Thyroid gland (tissue), 4 donors: ENCODE measurements at regions of chr11 and their contacts with region 1.

Region 1: GRCh38 chr11:72793425-72794367 is at the start of gene STARD10:
- DNase-seq: peak; percentile 95 to 96
- H3K4me3 ChIP-seq: peak within 1 kb of the TSS; percentile 31 to 51 (median 41)
- H3K27ac ChIP-seq: peak within 1 kb of the TSS; percentile 89 to 94 (median 91)
- H3K4me1 ChIP-seq: peaks cover 9 to 21% of the 10 kb centered on the region in 2 donors
- H3K27me3 ChIP-seq: no peaks in the 10 kb centered on the region
- CTCF ChIP-seq: peak; percentile 93 to 100 (median 98)
- POLR2A ChIP-seq: peak in 1 of 2 donors; percentile 63
- total RNA-seq, gene STARD10: 67.7 to 113 (median 82.0) TPM

Region 2: DNA sequence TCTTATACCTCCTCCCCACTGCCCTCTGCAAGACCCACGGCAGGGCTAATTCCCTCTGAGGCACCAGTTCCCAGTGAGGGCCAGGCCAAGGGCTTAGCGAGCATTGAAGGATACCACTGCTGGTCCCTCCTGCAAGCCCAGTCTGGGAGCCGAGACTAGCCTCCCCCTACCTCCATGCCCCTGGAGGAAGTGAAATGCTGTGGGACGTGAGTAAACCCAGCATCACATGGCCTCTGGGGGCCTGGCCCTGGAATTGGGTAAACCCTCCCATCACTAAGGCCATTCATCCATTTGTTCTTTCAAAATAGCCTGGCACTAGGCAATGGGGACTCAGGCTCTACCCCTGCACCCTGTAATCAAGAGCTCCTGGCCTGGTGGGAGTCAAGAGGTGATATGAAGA is 66.2 kb before region 1 on chr11:
- intact Hi-C with region 1: loop called (anchors 2 kb)
- DNase-seq: no peak
- H3K4me3 ChIP-seq: no peak overlapping the region
- H3K27ac ChIP-seq: no peak overlapping the region
- H3K4me1 ChIP-seq: peaks cover 16 to 22% of the 10 kb centered on the region in 2 donors
- H3K27me3 ChIP-seq: no peaks in the 10 kb centered on the region
- CTCF ChIP-seq: no peak
- POLR2A ChIP-seq: no peak

Region 3: DNA sequence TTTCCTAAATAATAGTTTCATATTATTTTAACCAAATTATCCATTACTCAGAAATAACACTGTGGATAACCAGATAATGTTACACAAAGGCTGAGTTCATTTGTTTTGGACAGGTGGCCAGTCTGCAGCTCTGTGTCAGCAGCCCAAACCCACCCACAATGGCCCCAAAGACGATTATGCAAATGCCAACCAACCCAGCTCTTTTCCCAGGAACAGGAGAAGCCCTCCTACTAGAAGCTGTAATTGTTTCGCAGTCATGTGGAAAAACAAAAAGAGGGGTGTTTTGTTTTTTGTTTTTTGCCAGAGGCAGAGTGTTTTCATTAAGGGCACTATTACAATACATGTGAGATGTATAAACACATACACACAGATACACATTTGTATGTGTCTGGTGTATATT is 246.3 kb after region 1 on chr11:
- intact Hi-C with region 1: no loop called
- DNase-seq: no peak
- H3K4me3 ChIP-seq: no peak overlapping the region
- H3K27ac ChIP-seq: no peak overlapping the region
- H3K4me1 ChIP-seq: no peaks in the 10 kb centered on the region
- H3K27me3 ChIP-seq: no peaks in the 10 kb centered on the region
- CTCF ChIP-seq: no peak
- POLR2A ChIP-seq: no peak